WTC11 (cell line): ENCODE measurements at regions of chr20 and their contacts with region 1.

Region 1: GRCh38 chr20:3753098-3753980 is 14.2 kb downstream of the ADISSP start:
- DNase-seq: peak; percentile 78
- ATAC-seq: peak; percentile 59
- H3K4me3 Mint-ChIP-seq: no peak overlapping the region
- H3K27ac Mint-ChIP-seq: no peak overlapping the region
- H3K4me1 Mint-ChIP-seq: peaks cover 6% of the 10 kb centered on the region
- H3K27me3 Mint-ChIP-seq: peaks cover 25% of the 10 kb centered on the region
- CTCF ChIP-seq: peak; percentile 57; the same call in 1 of the 2 replicates

Region 2: DNA sequence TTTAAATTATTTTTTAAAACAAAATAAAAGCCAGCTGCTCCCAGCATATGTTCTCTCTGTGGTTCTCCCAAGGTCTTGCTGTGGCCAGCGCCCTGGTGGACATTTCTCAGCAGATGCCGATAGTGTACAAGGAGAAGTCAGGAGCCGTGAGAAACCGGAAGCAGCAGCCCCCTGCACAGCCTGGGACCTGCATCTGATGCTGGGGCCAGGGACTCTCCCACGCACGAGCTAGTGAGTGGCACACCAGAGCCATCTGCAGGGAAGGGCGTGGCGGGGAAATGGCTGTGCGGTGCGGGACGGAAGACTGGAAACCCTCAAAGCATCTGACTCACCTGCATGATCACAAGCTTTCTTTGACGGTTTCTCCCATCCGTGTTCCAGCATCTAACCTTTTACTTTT is 106.7 kb before region 1 on chr20:
- CTCF ChIA-PET with region 1: no interaction called
- POLR2A ChIA-PET with region 1: no interaction called
- DNase-seq: no peak
- ATAC-seq: no peak
- H3K4me3 Mint-ChIP-seq: no peak overlapping the region
- H3K27ac Mint-ChIP-seq: no peak overlapping the region
- H3K4me1 Mint-ChIP-seq: no peaks in the 10 kb centered on the region
- H3K27me3 Mint-ChIP-seq: no peaks in the 10 kb centered on the region
- CTCF ChIP-seq: no peak

Region 3: GRCh38 chr20:3679749-3680700 is 73.3 kb before region 1 on chr20:
- CTCF ChIA-PET with region 1: interaction called, 14 read pairs
- POLR2A ChIA-PET with region 1: interaction called, 3 read pairs
- DNase-seq: peak; percentile 42
- ATAC-seq: peak; percentile 8
- H3K4me3 Mint-ChIP-seq: peak overlapping the region; percentile 34
- H3K27ac Mint-ChIP-seq: no peak overlapping the region
- H3K4me1 Mint-ChIP-seq: peaks cover 37% of the 10 kb centered on the region
- H3K27me3 Mint-ChIP-seq: peaks cover 25% of the 10 kb centered on the region
- CTCF ChIP-seq: no peak

Region 4: GRCh38 chr20:3710703-3711483 is 42.4 kb before region 1 on chr20:
- CTCF ChIA-PET with region 1: interaction called, 88 read pairs
- POLR2A ChIA-PET with region 1: interaction called, 3 read pairs
- DNase-seq: peak; percentile 92
- ATAC-seq: peak; percentile 81
- H3K4me3 Mint-ChIP-seq: no peak overlapping the region
- H3K27ac Mint-ChIP-seq: no peak overlapping the region
- H3K4me1 Mint-ChIP-seq: no peaks in the 10 kb centered on the region
- H3K27me3 Mint-ChIP-seq: no peaks in the 10 kb centered on the region
- CTCF ChIP-seq: peak; percentile 99

Region 5: GRCh38 chr20:3732327-3733118 is 20.8 kb before region 1 on chr20 and contains the start of gene HSPA12B:
- CTCF ChIA-PET with region 1: interaction called, 43 read pairs
- POLR2A ChIA-PET with region 1: interaction called, 4 read pairs
- DNase-seq: peak; percentile 51
- ATAC-seq: peak; percentile 69
- H3K4me3 Mint-ChIP-seq: peak within 1 kb of the TSS; percentile 64
- H3K27ac Mint-ChIP-seq: no peak within 1 kb of the TSS
- H3K4me1 Mint-ChIP-seq: peaks cover 23% of the 10 kb centered on the region
- H3K27me3 Mint-ChIP-seq: peaks cover 43% of the 10 kb centered on the region
- CTCF ChIP-seq: no peak
- total RNA-seq, gene HSPA12B: 6.3 to 8.5 TPM (median 8.2 TPM) in 3 replicates

Region 6: DNA sequence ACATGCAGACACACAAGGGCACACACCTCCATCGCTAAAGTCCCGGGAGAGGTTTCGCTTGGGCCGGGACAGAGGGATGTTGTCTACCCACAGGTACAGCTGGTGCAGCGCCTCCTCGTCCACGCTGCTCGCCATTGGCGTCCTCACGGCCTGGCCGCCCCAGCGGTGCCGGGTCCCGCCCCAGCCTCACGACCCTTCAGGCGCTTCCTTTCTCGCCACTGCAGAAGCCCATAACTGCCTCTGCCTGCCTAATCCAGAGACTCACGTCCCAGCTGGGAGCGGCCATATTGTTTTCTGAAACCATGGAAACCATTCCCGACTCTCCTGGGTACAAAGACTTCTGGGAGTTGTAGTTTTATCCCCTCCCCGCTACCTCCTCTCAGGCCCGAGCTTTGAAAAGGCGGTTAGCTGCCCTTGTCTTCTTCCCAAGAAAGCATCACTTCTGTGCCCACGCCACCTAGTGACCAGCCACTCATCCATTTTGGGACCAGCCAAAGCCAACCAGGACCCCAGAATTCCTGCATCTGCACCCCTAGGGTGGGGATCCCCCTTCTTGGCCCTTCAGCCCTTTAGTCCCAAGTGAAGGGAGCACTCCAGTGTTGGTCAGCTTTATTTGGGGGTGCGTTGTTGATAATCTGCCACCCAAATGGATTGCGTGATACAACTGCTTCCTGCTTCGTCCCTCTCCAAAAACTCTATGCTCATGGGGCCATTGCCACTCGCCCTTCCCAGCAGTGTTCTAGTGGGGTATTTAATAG is 28.0 kb after region 1 on chr20 and contains the start of gene SPEF1:
- CTCF ChIA-PET with region 1: interaction called, 23 read pairs
- POLR2A ChIA-PET with region 1: interaction called, 4 read pairs
- DNase-seq: peak; percentile 83
- ATAC-seq: peak; percentile 58
- H3K4me3 Mint-ChIP-seq: peak within 1 kb of the TSS; percentile 67
- H3K27ac Mint-ChIP-seq: peak within 1 kb of the TSS; percentile 29; the same call in 1 of the 2 replicates
- H3K4me1 Mint-ChIP-seq: peaks cover 45% of the 10 kb centered on the region
- H3K27me3 Mint-ChIP-seq: peaks cover 42% of the 10 kb centered on the region
- CTCF ChIP-seq: no peak
- total RNA-seq, gene SPEF1: 0.41 to 0.72 TPM (median 0.64 TPM) in 3 replicates

Region 7: DNA sequence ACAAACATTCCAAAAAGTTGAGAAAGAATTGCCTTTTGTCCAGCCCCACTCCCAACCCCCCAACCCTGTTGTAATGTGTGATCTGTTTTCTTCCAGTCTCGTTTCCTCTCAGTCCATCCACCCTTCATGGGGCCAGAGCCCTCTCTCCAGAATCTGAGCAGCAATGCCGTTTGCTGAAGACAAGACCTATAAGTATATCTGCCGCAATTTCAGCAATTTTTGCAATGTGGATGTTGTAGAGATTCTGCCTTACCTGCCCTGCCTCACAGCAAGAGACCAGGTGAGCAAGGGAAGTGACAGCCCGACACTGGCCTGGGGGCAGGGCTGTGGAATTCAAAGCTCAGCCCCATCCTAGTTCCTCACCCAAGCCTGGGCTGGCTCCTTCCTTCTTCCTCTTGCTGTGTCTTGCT is 101.1 kb after region 1 on chr20:
- CTCF ChIA-PET with region 1: interaction called, 14 read pairs
- POLR2A ChIA-PET with region 1: interaction called, 3 read pairs
- DNase-seq: peak; percentile 22
- ATAC-seq: peak; percentile 71
- H3K4me3 Mint-ChIP-seq: no peak overlapping the region
- H3K27ac Mint-ChIP-seq: peak overlapping the region; percentile 36; the same call in 1 of the 2 replicates
- H3K4me1 Mint-ChIP-seq: peaks cover 3% of the 10 kb centered on the region; the same call in 1 of the 2 replicates
- H3K27me3 Mint-ChIP-seq: no peaks in the 10 kb centered on the region
- CTCF ChIP-seq: no peak